Endothelial cell of umbilical vein (primary cell): ENCODE measurements at regions of chr6 and their contacts with region 1.

Region 1: DNA sequence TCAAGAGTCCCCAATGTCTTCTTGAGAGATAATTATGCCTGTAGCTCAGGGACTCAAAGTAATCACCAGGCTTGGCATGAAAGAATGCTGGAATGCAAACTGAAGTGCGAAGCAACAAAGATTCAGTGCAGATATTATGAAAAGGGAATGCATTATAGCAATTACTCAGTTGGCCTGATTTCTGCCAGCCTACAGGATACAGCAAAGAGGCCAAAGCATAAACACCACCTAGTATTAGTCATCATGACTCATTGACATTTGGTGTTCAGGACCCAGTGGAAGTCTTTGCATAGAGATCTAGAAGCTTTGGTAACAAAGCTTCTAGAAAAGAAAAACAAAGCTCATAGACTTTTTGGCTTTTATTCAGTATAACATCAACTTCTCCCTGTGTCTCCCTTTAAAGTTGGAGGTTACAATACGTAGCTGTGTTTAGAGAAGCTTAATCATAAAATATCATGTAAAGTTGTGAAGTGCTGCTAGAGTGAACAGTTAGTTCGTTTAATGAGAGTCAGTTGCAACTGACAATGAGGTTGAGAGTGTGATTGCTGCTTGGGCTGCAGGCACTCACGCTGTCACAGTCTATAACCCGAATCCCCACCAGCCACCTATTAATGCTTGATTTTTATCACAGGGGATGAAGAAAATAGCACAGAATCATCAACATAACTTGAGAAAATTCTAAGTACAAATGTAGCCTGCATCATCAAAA is 932.7 kb downstream of the TFAP2A start:
- DNase-seq: peak; percentile 86
- H3K4me3 ChIP-seq: no peak overlapping the region
- H3K27ac ChIP-seq: peak overlapping the region; percentile 65
- H3K4me1 ChIP-seq: peaks cover 19% of the 10 kb centered on the region
- H3K27me3 ChIP-seq: no peaks in the 10 kb centered on the region
- CTCF ChIP-seq: no peak
- POLR2A ChIP-seq: no peak

Region 2: DNA sequence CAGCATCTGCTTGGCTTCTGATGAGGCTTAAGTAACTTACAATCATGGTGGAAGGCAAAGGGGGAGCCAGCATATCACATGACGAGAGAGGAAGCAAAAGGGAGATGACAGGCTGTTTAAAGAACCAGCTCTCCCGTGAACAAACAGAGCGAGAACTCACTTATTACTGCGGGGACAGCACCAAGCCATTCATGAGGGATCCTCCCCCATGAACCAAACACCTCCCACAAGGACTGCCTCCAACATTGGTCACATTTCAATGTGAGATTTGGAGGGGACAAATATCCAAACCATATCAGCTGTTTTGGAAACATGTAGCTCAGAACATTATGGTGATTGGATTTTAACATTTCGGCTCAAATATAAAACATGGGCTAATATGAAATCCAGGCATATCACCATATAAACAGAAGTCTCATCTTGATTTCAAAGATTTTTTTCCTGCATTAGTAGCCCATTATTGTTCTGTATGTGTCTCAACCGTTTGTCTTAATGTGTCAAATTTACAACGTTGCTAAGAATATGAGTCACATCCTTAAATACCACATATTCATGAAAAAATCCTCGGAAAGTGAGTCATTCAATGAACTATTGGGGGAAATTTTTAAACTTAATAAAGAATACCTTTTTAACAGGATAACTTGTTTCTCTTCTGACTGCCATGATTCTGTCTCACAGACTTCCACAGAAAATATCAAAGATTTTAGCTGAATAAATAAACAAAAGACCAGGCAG is 38.4 kb after region 1 on chr6:
- CTCF ChIA-PET with region 1: no interaction called
- POLR2A ChIA-PET with region 1: no interaction called
- dilution Hi-C with region 1: no loop called
- intact Hi-C with region 1: loop called (anchors 1 kb)
- DNase-seq: peak; percentile 88
- H3K4me3 ChIP-seq: peak overlapping the region in 1 of 3 experiments; percentile 30
- H3K27ac ChIP-seq: peak overlapping the region; percentile 92
- H3K4me1 ChIP-seq: peaks cover 33% of the 10 kb centered on the region
- H3K27me3 ChIP-seq: no peaks in the 10 kb centered on the region
- CTCF ChIP-seq: no peak
- POLR2A ChIP-seq: no peak